Calu3 (cell line): ENCODE measurements at regions of chrX and their contacts with region 1.

Region 1: GRCh38 chrX:134032441-134032840 is 47.0 kb upstream of the GPC3 start:
- DNase-seq: no peak
- H3K4me3 Mint-ChIP-seq: no peak overlapping the region
- H3K27ac Mint-ChIP-seq: no peak overlapping the region
- H3K4me1 Mint-ChIP-seq: no peaks in the 10 kb centered on the region
- H3K27me3 Mint-ChIP-seq: no peaks in the 10 kb centered on the region
- CTCF ChIP-seq: no peak

Region 2: GRCh38 chrX:134144231-134144630 is 111.8 kb after region 1 on chrX:
- CTCF ChIA-PET with region 1: no interaction called
- intact Hi-C with region 1: loop called (anchors 10 kb)
- DNase-seq: peak; percentile 3
- H3K4me3 Mint-ChIP-seq: no peak overlapping the region
- H3K27ac Mint-ChIP-seq: no peak overlapping the region
- H3K4me1 Mint-ChIP-seq: no peaks in the 10 kb centered on the region
- H3K27me3 Mint-ChIP-seq: peaks cover 14% of the 10 kb centered on the region
- CTCF ChIP-seq: no peak